Activated naive CD4-positive, alpha-beta T cell treated with anti-CD3 and anti-CD28 coated beads for 36 hours (primary cell): ENCODE measurements at regions of chr13 and their contacts with region 1.

Region 1: DNA sequence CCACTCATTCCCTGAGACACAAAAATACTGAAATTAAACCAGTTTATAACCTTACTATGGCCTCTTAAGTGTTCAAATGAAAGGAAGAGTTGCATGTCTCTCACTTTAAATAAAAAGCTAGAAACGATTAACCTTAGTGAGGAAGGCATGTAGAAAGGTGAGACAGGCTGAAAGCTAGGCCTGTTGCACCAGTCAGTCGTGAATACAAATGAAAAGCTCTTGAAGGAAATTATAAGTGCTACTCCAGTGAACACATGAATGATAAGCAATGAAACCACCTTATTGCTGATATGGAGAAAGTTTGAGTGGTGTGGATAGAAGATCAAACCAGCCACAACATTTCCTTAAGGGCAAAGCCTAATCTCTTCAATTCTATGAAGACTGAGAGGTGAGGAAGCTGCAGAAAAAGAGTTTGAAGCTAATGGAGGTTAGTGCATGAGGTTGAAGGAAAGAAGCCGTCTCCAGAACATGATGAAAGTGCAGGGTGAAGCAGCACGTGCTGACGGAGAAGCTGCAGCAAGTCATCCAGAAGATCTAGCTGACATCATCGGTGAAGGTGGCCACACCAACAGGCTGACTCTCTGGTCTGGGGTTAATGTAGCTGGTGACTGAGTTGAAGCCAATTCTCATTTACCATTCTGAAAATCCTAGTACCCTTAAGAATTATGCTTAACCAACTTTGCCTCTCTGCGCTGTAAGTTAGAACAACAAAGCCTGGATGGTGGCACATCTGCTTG is 94.5 kb upstream of the TEX29 start:
- DNase-seq: no peak
- H3K4me3 Mint-ChIP-seq: no peak overlapping the region
- H3K27ac Mint-ChIP-seq: no peak overlapping the region
- H3K4me1 Mint-ChIP-seq: peaks cover 29% of the 10 kb centered on the region
- H3K27me3 Mint-ChIP-seq: no peaks in the 10 kb centered on the region

Region 2: DNA sequence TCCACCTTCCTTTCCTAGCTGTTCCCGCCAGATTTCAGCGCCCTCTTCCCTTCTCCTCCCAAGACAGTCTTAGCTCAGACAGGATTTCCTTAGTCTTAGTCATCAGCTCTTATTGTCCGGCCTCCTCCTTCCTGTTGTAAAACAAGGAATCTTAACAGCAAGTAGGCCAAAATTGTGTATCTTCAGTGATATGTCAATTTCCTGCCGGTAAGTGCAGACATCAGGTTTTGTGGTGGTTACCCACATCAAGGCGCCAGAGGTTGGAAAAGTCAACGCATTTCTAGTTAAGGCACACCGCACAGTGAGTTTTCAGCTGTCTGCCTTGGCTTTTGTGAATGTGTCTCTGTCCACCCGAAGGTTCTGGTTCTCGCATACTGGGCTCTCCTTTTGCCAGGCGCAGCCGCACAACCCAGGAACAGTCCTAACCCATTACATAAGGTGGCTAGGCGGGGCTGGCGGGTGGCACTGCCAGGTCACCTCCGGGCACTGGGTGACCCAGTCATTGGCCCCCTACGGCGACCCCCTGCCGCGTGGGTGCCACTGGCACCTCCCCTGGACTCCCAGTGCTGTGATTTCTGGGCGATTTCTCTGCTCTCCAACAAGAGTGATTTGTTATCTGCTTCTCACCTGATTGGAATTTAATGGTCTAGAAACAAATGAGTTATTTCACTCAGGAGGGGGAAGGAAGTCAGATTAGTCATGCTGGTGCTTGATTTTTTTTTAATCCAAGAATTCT is 906.0 kb before region 1 on chr13:
- CTCF ChIA-PET with region 1: no interaction called
- intact Hi-C with region 1: no loop called
- DNase-seq: peak; percentile 80
- H3K4me3 Mint-ChIP-seq: no peak overlapping the region
- H3K27ac Mint-ChIP-seq: peak overlapping the region; percentile 59
- H3K4me1 Mint-ChIP-seq: peaks cover 13% of the 10 kb centered on the region
- H3K27me3 Mint-ChIP-seq: peaks cover 34% of the 10 kb centered on the region

Region 3: GRCh38 chr13:111202745-111203144 is 23.2 kb before region 1 on chr13:
- CTCF ChIA-PET with region 1: interaction called, 10 read pairs
- intact Hi-C with region 1: no loop called
- DNase-seq: peak; percentile 51
- H3K4me3 Mint-ChIP-seq: no peak overlapping the region
- H3K27ac Mint-ChIP-seq: peak overlapping the region; percentile 50
- H3K4me1 Mint-ChIP-seq: peaks cover 54% of the 10 kb centered on the region
- H3K27me3 Mint-ChIP-seq: no peaks in the 10 kb centered on the region

Region 4: GRCh38 chr13:111384441-111385182 is 158.6 kb after region 1 on chr13:
- CTCF ChIA-PET with region 1: no interaction called
- intact Hi-C with region 1: no loop called
- DNase-seq: peak; percentile 56
- H3K4me3 Mint-ChIP-seq: peak overlapping the region; percentile 26
- H3K27ac Mint-ChIP-seq: no peak overlapping the region
- H3K4me1 Mint-ChIP-seq: peaks cover 34% of the 10 kb centered on the region
- H3K27me3 Mint-ChIP-seq: no peaks in the 10 kb centered on the region